Endothelial cell of umbilical vein (primary cell): ENCODE measurements at regions of chr11 and their contacts with region 1.

Region 1: DNA sequence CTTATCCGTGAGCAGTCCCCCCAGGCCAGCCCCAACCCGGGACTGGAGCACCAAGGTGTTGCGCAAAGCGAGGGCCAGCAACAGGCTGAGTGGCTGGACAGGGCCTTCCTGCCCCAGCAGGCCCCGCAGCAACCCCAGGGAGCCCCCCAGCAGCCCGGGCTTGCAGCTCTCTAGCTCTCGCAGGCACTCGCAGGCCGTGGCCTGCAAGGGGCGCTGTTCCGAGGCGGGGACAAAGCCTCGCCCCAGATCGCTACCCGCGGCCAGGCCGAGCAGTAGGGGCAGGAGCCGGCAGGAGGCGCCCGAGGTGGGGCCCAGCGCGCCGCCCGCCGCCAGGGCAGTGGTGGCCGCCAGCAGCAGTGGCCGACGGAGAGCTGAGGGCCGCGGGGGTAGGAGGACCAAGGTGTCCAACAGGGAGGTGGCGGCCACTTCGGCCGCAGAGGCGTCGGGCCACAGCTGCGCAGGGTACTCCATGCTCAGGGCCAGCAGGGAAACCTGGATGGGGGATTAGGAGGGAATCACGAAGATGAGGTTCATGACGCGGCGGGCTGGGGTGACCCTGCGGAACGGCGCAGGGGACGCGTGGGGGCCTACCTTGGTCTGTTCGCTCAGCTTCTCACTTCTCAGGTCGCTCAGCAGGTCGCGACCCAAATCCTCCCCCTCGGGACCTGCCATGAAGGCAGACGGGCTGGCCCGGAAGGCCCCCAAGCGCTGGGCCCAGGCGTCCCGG is 762 bp downstream of the AP5B1 start:
- DNase-seq: peak; percentile 85
- H3K4me3 ChIP-seq: peak overlapping the region; percentile 55 to 74 (median 73)
- H3K27ac ChIP-seq: peak overlapping the region; percentile 81
- H3K4me1 ChIP-seq: peaks cover 5% of the 10 kb centered on the region
- H3K27me3 ChIP-seq: peaks cover under 1 to 2% of the 10 kb centered on the region in 2 experiments
- CTCF ChIP-seq: peak; percentile 96 to 99
- POLR2A ChIP-seq: no peak

Region 2: GRCh38 chr11:65637794-65638317 is 142.2 kb before region 1 on chr11 and contains the start of gene SIPA1:
- CTCF ChIA-PET with region 1: interaction called, 12 read pairs
- POLR2A ChIA-PET with region 1: no interaction called
- dilution Hi-C with region 1: no loop called
- intact Hi-C with region 1: no loop called
- DNase-seq: peak; percentile 96
- H3K4me3 ChIP-seq: peak within 1 kb of the TSS; percentile 56 to 62 (median 62)
- H3K27ac ChIP-seq: peak within 1 kb of the TSS; percentile 78
- H3K4me1 ChIP-seq: peaks cover 41% of the 10 kb centered on the region
- H3K27me3 ChIP-seq: no peaks in the 10 kb centered on the region
- CTCF ChIP-seq: peak; percentile 58 to 83
- POLR2A ChIP-seq: peak; percentile 96
- total RNA-seq, gene SIPA1: 119 and 128 TPM in 2 replicates

Region 3: DNA sequence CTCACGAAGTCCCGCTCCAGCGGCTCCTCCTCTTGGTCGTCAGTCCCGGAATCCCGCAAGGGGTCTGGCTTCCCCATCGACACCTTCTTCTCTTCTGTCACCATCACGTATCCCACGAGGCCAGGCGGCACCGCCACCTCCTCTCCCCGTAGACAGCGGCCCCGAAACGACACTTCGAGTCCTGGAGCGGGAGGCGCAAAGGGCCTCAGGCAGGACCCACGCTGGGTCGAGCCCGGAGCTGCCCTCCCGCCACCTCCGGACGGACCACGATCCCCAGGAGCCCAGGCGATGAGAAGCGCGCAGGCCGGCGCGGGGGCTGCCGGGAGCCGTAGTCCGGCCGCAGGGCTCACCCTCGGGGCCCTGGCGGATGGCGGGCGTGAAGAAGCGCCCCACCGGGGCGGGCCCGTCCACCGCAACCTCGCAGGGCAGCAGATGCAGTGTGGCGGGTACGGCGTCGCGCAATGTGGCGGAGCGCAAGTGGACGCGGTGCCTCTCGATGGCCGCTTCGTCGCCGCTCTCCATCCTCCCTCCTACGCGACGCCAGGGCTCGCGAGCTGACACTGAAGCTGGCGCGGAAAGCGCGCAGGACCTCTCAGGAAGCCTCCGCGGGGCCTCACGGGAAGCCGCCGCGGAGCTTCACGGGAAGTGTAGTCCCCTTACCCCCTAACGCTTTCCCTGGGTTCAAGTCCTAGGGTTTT is 59.6 kb before region 1 on chr11 and contains the start of gene RNASEH2C:
- CTCF ChIA-PET with region 1: interaction called, 21 read pairs
- POLR2A ChIA-PET with region 1: interaction called, 3 read pairs
- dilution Hi-C with region 1: no loop called
- intact Hi-C with region 1: no loop called
- DNase-seq: peak; percentile 85
- H3K4me3 ChIP-seq: peak within 1 kb of the TSS; percentile 64 to 82 (median 67)
- H3K27ac ChIP-seq: peak within 1 kb of the TSS; percentile 36
- H3K4me1 ChIP-seq: peaks cover 13% of the 10 kb centered on the region
- H3K27me3 ChIP-seq: no peaks in the 10 kb centered on the region
- CTCF ChIP-seq: no peak
- POLR2A ChIP-seq: peak; percentile 76
- total RNA-seq, gene RNASEH2C: 46.4 and 62.0 TPM in 2 replicates

Region 4: GRCh38 chr11:65766535-65766934 is 13.5 kb before region 1 on chr11:
- CTCF ChIA-PET with region 1: interaction called, 59 read pairs
- POLR2A ChIA-PET with region 1: no interaction called
- dilution Hi-C with region 1: no loop called
- intact Hi-C with region 1: no loop called
- DNase-seq: no peak
- H3K4me3 ChIP-seq: no peak overlapping the region
- H3K27ac ChIP-seq: no peak overlapping the region
- H3K4me1 ChIP-seq: no peaks in the 10 kb centered on the region
- H3K27me3 ChIP-seq: peaks cover 0 to 3% of the 10 kb centered on the region in 2 experiments
- CTCF ChIP-seq: no peak
- POLR2A ChIP-seq: no peak

Region 5: GRCh38 chr11:65802841-65803240 is 22.8 kb after region 1 on chr11:
- CTCF ChIA-PET with region 1: interaction called, 39 read pairs
- POLR2A ChIA-PET with region 1: interaction called, 4 read pairs
- dilution Hi-C with region 1: no loop called
- intact Hi-C with region 1: no loop called
- DNase-seq: no peak
- H3K4me3 ChIP-seq: no peak overlapping the region
- H3K27ac ChIP-seq: no peak overlapping the region
- H3K4me1 ChIP-seq: no peaks in the 10 kb centered on the region
- H3K27me3 ChIP-seq: peaks cover 12 to 25% of the 10 kb centered on the region in 2 experiments
- CTCF ChIP-seq: no peak
- POLR2A ChIP-seq: no peak

Region 6: GRCh38 chr11:65817835-65818742 is 38.1 kb after region 1 on chr11:
- CTCF ChIA-PET with region 1: interaction called, 109 read pairs
- POLR2A ChIA-PET with region 1: interaction called, 5 read pairs
- dilution Hi-C with region 1: no loop called
- intact Hi-C with region 1: loop called (anchors 1 kb)
- DNase-seq: peak; percentile 80
- H3K4me3 ChIP-seq: peak overlapping the region; percentile 13 to 74 (median 66)
- H3K27ac ChIP-seq: no peak overlapping the region
- H3K4me1 ChIP-seq: no peaks in the 10 kb centered on the region
- H3K27me3 ChIP-seq: peaks cover 0 to 2% of the 10 kb centered on the region in 2 experiments
- CTCF ChIP-seq: peak; percentile 97 to 99
- POLR2A ChIP-seq: no peak

Region 7: DNA sequence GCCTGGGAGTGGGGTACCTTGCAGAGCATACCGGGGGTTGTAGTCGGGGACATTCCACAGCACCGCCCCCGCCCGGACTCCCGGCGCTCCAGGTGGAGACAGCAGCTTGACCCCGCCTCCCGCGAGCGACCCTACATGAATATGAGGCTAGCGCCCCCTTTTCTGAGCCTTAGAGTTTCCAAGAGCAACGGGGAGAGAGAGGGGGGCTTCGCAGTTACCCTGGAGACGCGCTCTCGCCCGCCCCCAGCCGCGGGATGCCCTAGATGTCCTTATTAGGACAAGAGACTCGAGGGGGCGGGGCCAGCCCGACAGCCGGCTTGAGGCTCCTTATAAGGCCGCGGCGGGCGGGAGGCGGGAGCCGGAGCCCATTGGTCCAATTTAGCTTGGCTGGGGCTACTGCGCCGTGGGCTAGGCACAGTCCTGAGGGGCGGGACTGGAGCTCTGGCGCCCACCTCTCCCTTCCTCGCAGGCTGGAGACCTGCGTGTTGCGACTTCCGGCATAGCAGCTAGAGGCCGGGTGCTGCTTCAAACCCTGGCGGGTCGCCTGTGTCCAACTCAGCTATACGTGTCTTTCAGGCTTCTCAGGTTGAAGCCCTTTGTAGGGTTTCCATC is 79.3 kb after region 1 on chr11:
- CTCF ChIA-PET with region 1: interaction called, 12 read pairs
- POLR2A ChIA-PET with region 1: interaction called, 5 read pairs
- dilution Hi-C with region 1: no loop called
- intact Hi-C with region 1: loop called (anchors 1 kb)
- DNase-seq: peak; percentile 98
- H3K4me3 ChIP-seq: peak overlapping the region; percentile 21 to 76 (median 71)
- H3K27ac ChIP-seq: peak overlapping the region; percentile 77
- H3K4me1 ChIP-seq: peaks cover 41% of the 10 kb centered on the region
- H3K27me3 ChIP-seq: no peaks in the 10 kb centered on the region
- CTCF ChIP-seq: peak in 1 of 2 donors; percentile 22
- POLR2A ChIP-seq: peak; percentile 94